ENCODE measurements at regions of chrX and their contacts with region 1.

Region 1: DNA sequence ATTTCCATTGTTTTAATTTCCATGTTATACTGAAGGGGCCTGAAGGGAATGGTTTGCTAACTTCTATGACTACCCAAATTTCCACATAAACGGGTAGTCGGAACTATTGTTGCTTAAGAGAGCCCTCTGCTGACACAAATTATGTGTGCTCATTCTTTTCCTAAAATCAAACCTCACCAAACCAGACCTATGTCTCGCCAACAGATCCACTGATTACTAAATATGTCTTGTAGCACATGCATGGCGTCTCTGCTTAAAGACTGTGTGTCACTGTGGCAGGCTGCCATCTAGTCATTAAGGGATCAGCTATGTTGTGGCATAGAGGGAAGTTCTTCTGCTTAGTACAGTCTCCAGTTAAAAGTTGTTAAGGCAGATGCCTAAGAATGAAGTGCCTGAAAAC is 25.1 kb downstream of the PIR start:
- DNase-seq: no peak
- H3K4me3 Mint-ChIP-seq: no peak overlapping the region
- H3K27ac Mint-ChIP-seq: no peak overlapping the region
- H3K4me1 Mint-ChIP-seq: peaks cover 3% of the 10 kb centered on the region
- H3K27me3 Mint-ChIP-seq: peaks cover 2% of the 10 kb centered on the region

Region 2: DNA sequence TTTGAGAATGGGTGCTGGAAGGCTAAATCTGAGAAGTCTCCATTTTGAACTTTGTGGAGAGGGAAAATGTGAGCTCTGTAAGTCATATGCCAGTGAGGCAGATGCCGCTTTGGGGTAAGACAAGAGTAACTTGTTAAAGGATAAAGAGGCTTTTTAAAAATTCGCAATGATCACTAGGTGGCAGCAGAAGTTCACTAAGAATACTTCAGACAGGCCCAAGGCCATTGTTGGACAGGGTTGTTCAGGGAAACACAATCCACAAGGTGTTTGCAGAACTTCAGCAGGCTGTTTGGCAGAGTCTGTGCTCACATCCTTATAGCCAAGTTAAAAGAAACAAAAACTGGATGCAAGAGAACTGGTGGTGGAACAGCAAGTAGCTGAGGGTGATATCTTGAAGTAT is 119.0 kb before region 1 on chrX:
- CTCF ChIA-PET with region 1: interaction called, 22 read pairs
- POLR2A ChIA-PET with region 1: no interaction called
- DNase-seq: peak; percentile 16
- H3K4me3 Mint-ChIP-seq: no peak overlapping the region
- H3K27ac Mint-ChIP-seq: no peak overlapping the region
- H3K4me1 Mint-ChIP-seq: no peaks in the 10 kb centered on the region
- H3K27me3 Mint-ChIP-seq: peaks cover 8% of the 10 kb centered on the region

Region 3: GRCh38 chrX:15497865-15498264 is 29.8 kb after region 1 on chrX:
- CTCF ChIA-PET with region 1: no interaction called
- POLR2A ChIA-PET with region 1: no interaction called
- DNase-seq: peak; percentile 36
- H3K4me3 Mint-ChIP-seq: no peak overlapping the region
- H3K27ac Mint-ChIP-seq: no peak overlapping the region
- H3K4me1 Mint-ChIP-seq: peaks cover 8% of the 10 kb centered on the region
- H3K27me3 Mint-ChIP-seq: peaks cover 19% of the 10 kb centered on the region